Activated naive CD4-positive, alpha-beta T cell treated with anti-CD3 and anti-CD28 coated beads for 36 hours (primary cell): ENCODE measurements at regions of chr13 and their contacts with region 1.

Region 1: DNA sequence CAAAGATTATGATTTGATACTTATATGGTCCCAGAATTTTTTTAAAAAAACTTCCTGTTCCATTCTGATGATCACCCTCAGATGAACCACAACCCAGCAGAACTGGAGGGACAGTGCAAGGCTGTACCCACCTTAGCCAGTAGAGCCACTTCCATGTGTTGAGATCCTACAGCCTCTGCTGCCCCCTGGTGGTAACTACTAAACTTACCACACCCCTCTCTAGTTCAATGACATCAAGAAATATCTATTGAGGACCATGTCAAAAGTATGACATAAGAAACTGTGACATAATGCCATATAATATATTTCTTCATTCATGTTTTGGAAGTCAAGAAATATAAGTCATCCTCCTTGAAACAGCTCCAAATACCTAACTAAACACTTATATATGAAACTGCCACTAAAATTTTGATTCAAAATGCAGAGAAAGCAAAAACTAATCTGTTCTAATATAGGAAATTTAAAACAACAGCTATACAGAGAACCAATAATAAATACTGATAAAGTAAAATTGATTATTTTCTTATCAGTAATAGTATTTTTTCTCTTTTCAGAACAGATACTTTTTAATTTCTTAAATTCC is 412.6 kb downstream of the KCTD12 start:
- DNase-seq: peak; percentile 85
- H3K4me3 Mint-ChIP-seq: no peak overlapping the region
- H3K27ac Mint-ChIP-seq: no peak overlapping the region
- H3K4me1 Mint-ChIP-seq: no peaks in the 10 kb centered on the region
- H3K27me3 Mint-ChIP-seq: peaks cover 5% of the 10 kb centered on the region

Region 2: GRCh38 chr13:75566658-75567057 is 907.0 kb before region 1 on chr13:
- CTCF ChIA-PET with region 1: no interaction called
- intact Hi-C with region 1: loop called (anchors 5 kb)
- DNase-seq: no peak
- H3K4me3 Mint-ChIP-seq: no peak overlapping the region
- H3K27ac Mint-ChIP-seq: no peak overlapping the region
- H3K4me1 Mint-ChIP-seq: no peaks in the 10 kb centered on the region
- H3K27me3 Mint-ChIP-seq: no peaks in the 10 kb centered on the region

Region 3: GRCh38 chr13:75687150-75687763 is 786.4 kb before region 1 on chr13:
- CTCF ChIA-PET with region 1: interaction called, 3 read pairs
- intact Hi-C with region 1: loop called (anchors 2 kb)
- DNase-seq: no peak
- H3K4me3 Mint-ChIP-seq: no peak overlapping the region
- H3K27ac Mint-ChIP-seq: no peak overlapping the region
- H3K4me1 Mint-ChIP-seq: peaks cover 12% of the 10 kb centered on the region
- H3K27me3 Mint-ChIP-seq: no peaks in the 10 kb centered on the region

Region 4: DNA sequence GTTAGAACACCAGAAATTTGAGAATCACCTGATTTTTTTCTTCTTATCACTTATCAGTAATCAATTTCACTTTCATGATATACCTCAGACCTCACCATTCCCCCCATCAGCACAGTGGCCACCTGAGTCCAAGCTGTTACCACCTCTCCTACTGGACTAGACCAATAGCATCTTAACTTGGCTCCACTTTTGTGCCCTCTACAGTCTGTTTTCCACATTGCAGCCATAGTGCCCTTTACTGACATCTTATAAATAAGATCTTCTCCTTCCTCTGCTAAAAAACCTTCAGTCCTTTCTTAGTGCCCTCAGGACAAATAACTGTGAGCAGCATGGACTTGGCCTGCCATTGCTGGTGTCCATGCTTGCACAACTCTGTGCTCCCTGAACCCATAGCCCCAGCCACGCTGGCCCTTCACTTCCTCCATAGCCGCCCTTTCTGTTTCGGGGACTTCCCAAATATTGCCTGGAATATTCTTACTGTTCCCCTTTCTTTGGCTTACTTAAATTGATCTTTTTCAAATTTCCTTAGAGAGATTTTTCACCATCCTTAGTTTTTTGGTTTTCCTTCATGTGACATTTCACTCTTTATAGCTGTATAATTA is 456.7 kb before region 1 on chr13:
- CTCF ChIA-PET with region 1: no interaction called
- intact Hi-C with region 1: loop called (anchors 10 kb)
- DNase-seq: peak; percentile 52
- H3K4me3 Mint-ChIP-seq: no peak overlapping the region
- H3K27ac Mint-ChIP-seq: no peak overlapping the region
- H3K4me1 Mint-ChIP-seq: no peaks in the 10 kb centered on the region
- H3K27me3 Mint-ChIP-seq: no peaks in the 10 kb centered on the region

Region 5: DNA sequence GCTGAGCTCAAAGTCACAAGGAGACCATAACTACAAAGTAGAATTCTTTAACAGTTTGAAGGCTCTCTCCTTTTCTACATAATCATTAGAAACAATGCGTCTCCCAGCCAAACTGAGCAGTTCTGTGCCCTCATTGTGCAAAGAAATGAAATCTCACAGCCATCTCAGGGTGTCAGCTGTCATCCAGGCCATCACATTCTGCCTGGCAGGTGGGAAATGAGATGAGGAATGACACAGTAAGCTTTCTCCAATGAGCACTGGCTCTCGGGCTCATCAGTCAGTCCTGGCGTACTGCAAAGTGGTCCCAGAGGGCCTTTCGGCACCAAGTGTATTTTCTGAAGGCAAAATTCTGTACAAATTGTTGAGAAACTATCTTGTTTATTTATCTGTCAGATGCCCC is 106.1 kb after region 1 on chr13:
- CTCF ChIA-PET with region 1: no interaction called
- intact Hi-C with region 1: no loop called
- DNase-seq: no peak
- H3K4me3 Mint-ChIP-seq: no peak overlapping the region
- H3K27ac Mint-ChIP-seq: no peak overlapping the region
- H3K4me1 Mint-ChIP-seq: no peaks in the 10 kb centered on the region
- H3K27me3 Mint-ChIP-seq: peaks cover 3% of the 10 kb centered on the region

Region 6: DNA sequence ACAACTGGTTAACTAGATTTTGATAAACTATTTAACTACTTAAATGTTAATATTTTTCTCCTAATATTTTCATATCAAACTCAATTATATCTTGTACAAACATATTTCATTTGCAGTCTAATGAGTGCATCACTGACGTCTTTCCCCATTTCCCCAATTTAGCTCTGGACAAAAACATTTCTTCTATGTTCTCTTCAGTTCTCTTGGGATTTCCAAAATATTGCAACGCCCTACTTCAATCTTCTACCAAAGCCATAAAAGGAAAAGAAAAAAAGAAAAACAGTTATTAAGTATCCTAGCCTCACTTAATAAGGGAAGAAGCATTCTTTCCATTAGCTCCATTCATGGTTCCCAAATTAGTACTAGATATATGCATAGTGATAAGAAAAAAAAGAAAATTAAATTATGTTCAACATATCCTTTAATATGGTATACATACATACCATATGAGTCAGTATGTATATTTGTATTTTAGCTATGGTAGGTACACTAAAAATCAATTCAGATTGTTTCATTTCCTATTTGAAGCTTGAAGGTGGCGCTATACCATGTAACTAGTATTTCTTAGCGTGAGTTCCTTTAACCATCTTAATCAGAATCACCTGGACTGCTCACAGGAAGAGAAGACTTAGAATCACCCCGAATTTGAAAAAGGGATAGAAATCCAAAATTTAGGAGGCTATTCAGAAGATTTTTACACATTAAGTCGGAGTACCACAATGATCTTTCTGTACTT is 543.4 kb after region 1 on chr13:
- CTCF ChIA-PET with region 1: no interaction called
- intact Hi-C with region 1: no loop called
- DNase-seq: no peak
- H3K4me3 Mint-ChIP-seq: no peak overlapping the region
- H3K27ac Mint-ChIP-seq: no peak overlapping the region
- H3K4me1 Mint-ChIP-seq: peaks cover 53% of the 10 kb centered on the region
- H3K27me3 Mint-ChIP-seq: no peaks in the 10 kb centered on the region